ENCODE measurements at regions of chr12 and their contacts with region 1.

Region 1: DNA sequence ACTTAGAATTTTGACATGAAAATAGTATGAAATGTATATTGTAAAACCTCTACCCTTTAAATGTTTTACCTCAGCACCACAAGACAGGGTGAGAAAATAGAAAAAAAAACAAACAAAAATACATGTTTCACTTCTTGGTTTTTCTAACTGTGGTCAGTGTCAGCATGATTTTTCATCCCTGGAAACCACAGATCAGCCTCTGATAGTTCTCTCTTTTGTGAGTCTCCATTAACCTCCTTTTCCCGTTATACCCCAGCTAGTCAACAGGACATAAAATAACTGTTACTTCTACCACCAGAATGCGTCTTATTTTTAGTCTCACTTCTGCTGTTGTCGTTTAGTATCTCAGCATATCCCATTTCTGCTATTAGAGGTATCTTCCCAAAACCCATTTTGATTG is 48.3 kb upstream of the KCNMB4 start:
- DNase-seq: peak; percentile 57
- H3K4me3 ChIP-seq: peak overlapping the region; percentile 16
- H3K27ac ChIP-seq: peak overlapping the region; percentile 50
- H3K4me1 ChIP-seq: peaks cover 34% of the 10 kb centered on the region
- CTCF ChIP-seq: no peak

Region 2: GRCh38 chr12:70332236-70332635 is 14.5 kb after region 1 on chr12:
- CTCF ChIA-PET with region 1: no interaction called
- POLR2A ChIA-PET with region 1: interaction called, 11 read pairs
- intact Hi-C with region 1: no loop called
- DNase-seq: no peak
- H3K4me3 ChIP-seq: no peak overlapping the region
- H3K27ac ChIP-seq: no peak overlapping the region
- H3K4me1 ChIP-seq: no peaks in the 10 kb centered on the region
- CTCF ChIP-seq: no peak

Region 3: DNA sequence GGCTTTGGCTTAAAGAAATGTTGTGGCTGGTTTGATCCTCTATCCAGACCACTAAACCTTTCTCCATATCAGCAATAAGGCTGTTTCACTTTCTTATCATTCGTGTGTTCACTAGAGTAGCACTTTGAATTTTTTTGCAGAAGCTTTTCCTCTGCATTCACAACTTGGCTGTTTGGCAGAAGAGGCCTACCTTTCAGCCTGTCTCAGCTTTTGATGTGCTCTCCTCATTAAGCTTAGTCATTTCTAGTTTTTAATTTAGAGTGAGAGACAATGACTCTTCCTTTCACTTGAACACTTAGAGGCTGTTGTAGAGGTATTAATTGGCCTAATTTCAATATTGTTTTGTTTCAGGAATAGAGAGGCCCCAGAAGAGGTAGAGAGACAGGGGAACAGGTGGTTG is 62.1 kb after region 1 on chr12:
- CTCF ChIA-PET with region 1: no interaction called
- POLR2A ChIA-PET with region 1: no interaction called
- intact Hi-C with region 1: no loop called
- DNase-seq: no peak
- H3K4me3 ChIP-seq: no peak overlapping the region
- H3K27ac ChIP-seq: no peak overlapping the region
- H3K4me1 ChIP-seq: no peaks in the 10 kb centered on the region
- CTCF ChIP-seq: no peak

Region 4: GRCh38 chr12:70628701-70629480 is 311.1 kb after region 1 on chr12:
- CTCF ChIA-PET with region 1: no interaction called
- POLR2A ChIA-PET with region 1: no interaction called
- intact Hi-C with region 1: no loop called
- DNase-seq: no peak
- H3K4me3 ChIP-seq: no peak overlapping the region
- H3K27ac ChIP-seq: no peak overlapping the region
- H3K4me1 ChIP-seq: no peaks in the 10 kb centered on the region
- CTCF ChIP-seq: no peak